ENCODE measurements at regions of chr10 and their contacts with region 1.

Region 1: DNA sequence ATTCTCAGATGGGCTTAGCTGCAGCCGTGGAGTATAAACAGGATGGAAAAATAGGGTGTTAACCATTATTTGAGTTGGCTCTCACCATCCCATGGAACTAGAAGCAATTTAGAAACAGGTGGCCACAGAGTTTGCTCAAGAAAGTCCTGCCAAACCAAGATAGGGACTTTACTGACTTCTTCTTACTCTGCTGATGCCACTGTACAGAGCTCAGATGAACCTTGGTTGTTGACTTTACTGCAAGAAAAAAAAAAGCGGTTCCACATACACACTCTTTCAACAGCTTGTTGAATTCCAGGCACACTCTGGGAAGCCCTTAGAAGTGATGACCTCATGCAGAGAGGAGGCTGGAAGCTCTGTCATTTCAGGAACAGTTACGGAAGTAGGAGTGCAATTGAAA is 753.4 kb downstream of the NRG3 start:
- DNase-seq: no peak
- H3K4me3 ChIP-seq: no peak overlapping the region
- H3K27ac ChIP-seq: no peak overlapping the region
- H3K4me1 ChIP-seq: no peaks in the 10 kb centered on the region
- H3K27me3 ChIP-seq: no peaks in the 10 kb centered on the region
- CTCF ChIP-seq: no peak
- POLR2A ChIP-seq: no peak

Region 2: GRCh38 chr10:81953420-81953819 is 675.0 kb before region 1 on chr10:
- intact Hi-C with region 1: loop called (anchors 5 kb)
- DNase-seq: no peak
- H3K4me3 ChIP-seq: no peak overlapping the region
- H3K27ac ChIP-seq: no peak overlapping the region
- H3K4me1 ChIP-seq: no peaks in the 10 kb centered on the region
- H3K27me3 ChIP-seq: no peaks in the 10 kb centered on the region
- CTCF ChIP-seq: no peak
- POLR2A ChIP-seq: no peak